Breast epithelium (tissue), 4 donors: ENCODE measurements at regions of chr5 and their contacts with region 1.

Region 1: GRCh38 chr5:38598994-38599611 is 42.7 kb upstream of the LIFR start:
- DNase-seq: no peak
- H3K4me3 ChIP-seq: no peak overlapping the region
- H3K27ac ChIP-seq: peak overlapping the region in 1 of 2 donors; percentile 5
- H3K4me1 ChIP-seq: no peaks in the 10 kb centered on the region
- H3K27me3 ChIP-seq: no peaks in the 10 kb centered on the region
- CTCF ChIP-seq: no peak
- POLR2A ChIP-seq: no peak

Region 2: DNA sequence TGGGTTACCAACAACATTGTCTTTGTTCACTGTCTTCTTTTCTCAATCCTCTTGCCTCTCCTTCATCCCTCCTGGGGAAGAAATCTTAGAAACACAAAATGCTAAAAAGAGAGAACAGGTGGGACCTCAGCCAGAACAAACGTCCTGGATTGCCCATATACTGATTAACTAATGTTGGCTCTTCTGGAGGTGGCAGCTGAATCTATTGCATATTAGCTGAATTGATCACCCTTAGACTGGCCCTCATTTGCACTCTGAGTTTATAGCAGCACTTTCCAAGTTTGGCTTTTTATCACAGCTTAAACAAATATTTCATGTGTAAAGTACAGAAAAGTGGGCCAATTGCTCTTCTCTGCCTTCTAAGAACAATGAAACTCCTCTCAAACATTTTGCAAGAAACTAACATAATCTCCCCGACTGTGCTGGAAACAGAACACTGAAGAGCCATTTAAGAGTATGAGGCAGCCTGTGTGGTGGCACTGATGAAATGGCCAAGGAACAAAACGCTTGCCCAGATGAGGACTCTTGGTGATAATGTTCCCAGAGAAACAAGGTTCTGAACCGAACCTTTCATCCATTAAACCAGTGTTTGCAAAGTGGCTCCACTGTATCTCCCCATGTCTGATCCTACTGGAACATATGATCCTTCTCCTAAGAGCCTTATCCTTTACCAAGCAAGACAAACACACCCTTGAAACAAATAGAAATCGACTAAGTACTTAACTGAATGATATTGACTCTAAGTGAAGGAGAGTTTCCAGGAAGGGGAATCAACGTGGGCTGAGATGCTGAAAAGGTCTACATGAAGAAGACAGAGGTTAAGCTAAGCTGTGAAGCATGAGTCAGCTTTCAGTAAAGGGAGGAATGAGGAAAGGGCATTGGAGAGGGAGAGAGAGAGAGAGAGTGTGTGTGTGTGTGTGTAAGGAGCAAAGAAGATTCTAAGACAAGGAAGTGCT is 40.6 kb after region 1 on chr5:
- intact Hi-C with region 1: loop called (anchors 10 kb)
- DNase-seq: no peak
- H3K4me3 ChIP-seq: no peak overlapping the region
- H3K27ac ChIP-seq: no peak overlapping the region
- H3K4me1 ChIP-seq: peaks cover 0 to 5% of the 10 kb centered on the region in 2 donors
- H3K27me3 ChIP-seq: no peaks in the 10 kb centered on the region
- CTCF ChIP-seq: no peak
- POLR2A ChIP-seq: no peak